Activated B cell treated with CpG ODN at 0.5 μM for 24 hours (primary cell): ENCODE measurements at regions of chr11 and their contacts with region 1.

Region 1: DNA sequence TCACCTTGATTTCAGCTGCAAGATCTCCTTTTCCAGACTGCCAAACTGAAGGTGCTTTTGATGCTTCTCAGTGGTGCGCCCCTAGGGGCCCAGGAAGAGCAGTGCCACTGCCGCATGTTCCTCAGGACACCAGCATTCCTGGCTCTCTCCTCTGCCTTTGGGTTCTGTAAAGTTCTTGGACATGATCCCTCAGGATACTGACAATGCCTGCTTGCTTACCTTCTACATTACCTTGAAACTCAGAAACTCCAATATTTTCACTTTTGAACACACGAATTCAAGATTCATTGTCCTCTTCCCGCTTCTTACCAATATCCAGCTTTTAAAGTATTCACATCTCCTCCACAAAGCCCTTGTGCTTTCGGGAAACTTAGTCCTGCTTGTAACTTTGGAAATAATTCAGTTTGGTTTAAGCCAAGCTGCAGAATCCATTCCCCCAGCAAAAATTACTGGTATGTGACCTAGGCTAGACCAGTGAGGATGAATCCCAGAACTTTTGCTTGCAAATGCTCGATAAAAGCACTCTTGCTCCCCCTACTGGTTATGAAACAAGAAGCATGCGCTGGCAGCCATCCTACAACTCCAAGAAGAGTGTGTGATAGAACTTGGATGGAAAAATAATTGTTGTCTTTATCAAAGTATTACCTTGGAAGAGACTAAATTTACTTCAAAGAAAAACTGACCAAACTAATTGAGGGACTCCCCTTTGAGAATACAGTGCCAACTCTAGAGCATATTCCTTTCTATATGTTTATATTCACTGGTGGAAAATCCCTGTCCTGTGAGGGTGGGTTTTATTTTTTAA is 16.5 kb upstream of the OR5B21 start:
- DNase-seq: no peak
- ATAC-seq: peak; percentile 18
- H3K4me3 Mint-ChIP-seq: peak overlapping the region; percentile 64
- H3K27ac Mint-ChIP-seq: peak overlapping the region; percentile 87
- H3K4me1 Mint-ChIP-seq: peaks cover 43% of the 10 kb centered on the region
- H3K27me3 Mint-ChIP-seq: no peaks in the 10 kb centered on the region
- CTCF ChIP-seq: no peak

Region 2: GRCh38 chr11:57324886-57325734 is 1199.3 kb before region 1 on chr11 and contains the start of gene TNKS1BP1:
- CTCF ChIA-PET with region 1: no interaction called
- POLR2A ChIA-PET with region 1: no interaction called
- intact Hi-C with region 1: loop called (anchors 10 kb)
- DNase-seq: peak; percentile 89
- ATAC-seq: peak; percentile 88
- H3K4me3 Mint-ChIP-seq: peak within 1 kb of the TSS; percentile 89
- H3K27ac Mint-ChIP-seq: peak within 1 kb of the TSS; percentile 95
- H3K4me1 Mint-ChIP-seq: peaks cover 34% of the 10 kb centered on the region
- H3K27me3 Mint-ChIP-seq: no peaks in the 10 kb centered on the region
- CTCF ChIP-seq: no peak
- total RNA-seq, gene TNKS1BP1: 13.9 and 14.3 TPM in 2 replicates

Region 3: GRCh38 chr11:57775491-57775890 is 748.9 kb before region 1 on chr11:
- CTCF ChIA-PET with region 1: no interaction called
- POLR2A ChIA-PET with region 1: no interaction called
- intact Hi-C with region 1: no loop called
- DNase-seq: no peak
- ATAC-seq: no peak
- H3K4me3 Mint-ChIP-seq: no peak overlapping the region
- H3K27ac Mint-ChIP-seq: no peak overlapping the region
- H3K4me1 Mint-ChIP-seq: peaks cover 44% of the 10 kb centered on the region
- H3K27me3 Mint-ChIP-seq: no peaks in the 10 kb centered on the region
- CTCF ChIP-seq: no peak

Region 4: GRCh38 chr11:58609723-58610122 is 85.3 kb after region 1 on chr11:
- CTCF ChIA-PET with region 1: no interaction called
- POLR2A ChIA-PET with region 1: interaction called, 10 read pairs
- intact Hi-C with region 1: no loop called
- DNase-seq: no peak
- ATAC-seq: no peak
- H3K4me3 Mint-ChIP-seq: no peak overlapping the region
- H3K27ac Mint-ChIP-seq: peak overlapping the region; percentile 53
- H3K4me1 Mint-ChIP-seq: peaks cover 40% of the 10 kb centered on the region
- H3K27me3 Mint-ChIP-seq: no peaks in the 10 kb centered on the region
- CTCF ChIP-seq: no peak